Left ventricle myocardium inferior (tissue), 1 donor: ENCODE measurements at regions of chr7 and their contacts with region 1.

Region 1: DNA sequence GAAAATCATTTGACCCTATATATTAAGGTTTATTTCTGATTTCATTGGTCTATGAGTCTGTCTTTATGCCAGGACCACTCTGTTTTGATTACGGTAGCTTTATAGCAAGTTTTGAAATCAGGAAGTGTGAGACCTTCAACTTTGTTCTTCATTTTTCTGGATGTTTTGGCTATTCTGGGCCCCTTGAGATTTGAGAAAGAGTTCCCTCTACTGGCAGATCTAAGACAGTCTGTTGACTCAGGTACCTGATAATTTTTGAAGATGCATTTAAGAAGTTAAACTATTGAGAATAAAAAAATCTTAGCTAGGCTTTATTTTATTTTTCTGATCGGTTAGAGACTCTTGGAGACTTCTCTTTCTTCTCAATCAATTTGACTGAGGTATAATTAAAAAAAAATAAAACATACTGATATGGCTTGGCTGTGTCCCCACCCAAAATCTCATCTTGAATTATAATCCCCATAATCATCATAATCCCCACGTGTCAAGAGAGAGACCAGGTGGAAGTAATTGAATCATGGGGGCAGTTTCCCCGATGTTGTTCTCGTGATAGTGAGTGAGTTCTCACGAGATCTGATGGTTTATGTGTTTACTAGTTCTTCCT is 209.2 kb downstream of the SNX10 start:
- DNase-seq: no peak
- H3K4me3 ChIP-seq: no peak overlapping the region
- H3K27ac ChIP-seq: no peak overlapping the region
- H3K4me1 ChIP-seq: no peaks in the 10 kb centered on the region
- H3K27me3 ChIP-seq: peaks cover 28% of the 10 kb centered on the region
- CTCF ChIP-seq: peak; percentile 34

Region 2: DNA sequence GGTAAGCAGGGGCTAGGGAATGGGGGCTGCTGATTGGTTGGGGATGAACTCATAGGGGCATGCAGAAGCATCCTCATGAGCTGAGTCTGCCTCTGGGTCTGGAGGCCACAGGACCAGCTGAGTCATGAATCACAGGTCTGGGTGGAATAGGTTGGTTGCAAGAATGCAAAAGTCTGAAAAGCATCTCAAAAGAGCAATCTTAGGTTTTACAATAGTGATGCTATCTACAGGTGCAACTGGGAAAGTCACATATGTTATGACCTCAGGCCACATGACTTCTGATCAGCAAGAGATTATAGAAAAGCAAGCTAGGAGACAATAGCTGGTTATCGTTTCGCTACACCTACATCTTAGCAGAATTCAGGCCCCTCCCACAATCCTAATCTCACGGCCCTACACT is 1984.9 kb before region 1 on chr7:
- intact Hi-C with region 1: no loop called
- DNase-seq: no peak
- H3K4me3 ChIP-seq: no peak overlapping the region
- H3K27ac ChIP-seq: no peak overlapping the region
- H3K4me1 ChIP-seq: no peaks in the 10 kb centered on the region
- H3K27me3 ChIP-seq: no peaks in the 10 kb centered on the region
- CTCF ChIP-seq: no peak

Region 3: GRCh38 chr7:26117142-26117807 is 383.6 kb before region 1 on chr7:
- intact Hi-C with region 1: no loop called
- DNase-seq: no peak
- H3K4me3 ChIP-seq: no peak overlapping the region
- H3K27ac ChIP-seq: no peak overlapping the region
- H3K4me1 ChIP-seq: no peaks in the 10 kb centered on the region
- H3K27me3 ChIP-seq: peaks cover 83% of the 10 kb centered on the region
- CTCF ChIP-seq: no peak

Region 4: GRCh38 chr7:26398756-26399501 is 101.9 kb before region 1 on chr7:
- intact Hi-C with region 1: loop called (anchors 10 kb)
- DNase-seq: peak; percentile 20
- H3K4me3 ChIP-seq: peak overlapping the region; percentile 80
- H3K27ac ChIP-seq: peak overlapping the region; percentile 69
- H3K4me1 ChIP-seq: peaks cover 20% of the 10 kb centered on the region
- H3K27me3 ChIP-seq: peaks cover 66% of the 10 kb centered on the region
- CTCF ChIP-seq: peak; percentile 19

Region 5: DNA sequence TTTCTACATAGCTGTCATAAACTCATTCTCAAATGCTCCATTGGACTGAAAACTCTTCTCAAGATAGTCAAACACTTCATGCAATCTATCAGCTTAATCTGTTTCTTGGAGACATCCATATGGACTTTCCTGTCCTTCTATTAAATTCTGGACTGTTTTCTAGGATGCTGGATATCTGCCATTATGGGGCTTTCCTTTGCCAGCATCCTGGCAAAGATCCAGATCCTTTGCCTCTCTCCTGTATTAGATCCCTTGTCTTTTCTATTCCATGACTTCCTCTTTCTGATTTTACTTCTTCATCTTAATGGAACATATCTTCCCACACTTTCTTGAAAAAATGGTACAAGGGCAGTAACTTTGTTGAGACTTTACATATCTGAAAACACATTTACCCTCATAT is 399.4 kb after region 1 on chr7:
- intact Hi-C with region 1: no loop called
- DNase-seq: no peak
- H3K4me3 ChIP-seq: no peak overlapping the region
- H3K27ac ChIP-seq: no peak overlapping the region
- H3K4me1 ChIP-seq: no peaks in the 10 kb centered on the region
- H3K27me3 ChIP-seq: peaks cover 45% of the 10 kb centered on the region
- CTCF ChIP-seq: no peak